Right ventricle myocardium inferior (tissue), 1 donor: ENCODE measurements at regions of chr3 and their contacts with region 1.

Region 1: GRCh38 chr3:16151109-16151765 is 23.2 kb upstream of the GALNT15 start:
- DNase-seq: peak; percentile 84
- ATAC-seq: peak; percentile 75

Region 2: GRCh38 chr3:15645736-15646501 is 505.3 kb before region 1 on chr3:
- intact Hi-C with region 1: no loop called
- DNase-seq: no peak
- ATAC-seq: no peak

Region 3: DNA sequence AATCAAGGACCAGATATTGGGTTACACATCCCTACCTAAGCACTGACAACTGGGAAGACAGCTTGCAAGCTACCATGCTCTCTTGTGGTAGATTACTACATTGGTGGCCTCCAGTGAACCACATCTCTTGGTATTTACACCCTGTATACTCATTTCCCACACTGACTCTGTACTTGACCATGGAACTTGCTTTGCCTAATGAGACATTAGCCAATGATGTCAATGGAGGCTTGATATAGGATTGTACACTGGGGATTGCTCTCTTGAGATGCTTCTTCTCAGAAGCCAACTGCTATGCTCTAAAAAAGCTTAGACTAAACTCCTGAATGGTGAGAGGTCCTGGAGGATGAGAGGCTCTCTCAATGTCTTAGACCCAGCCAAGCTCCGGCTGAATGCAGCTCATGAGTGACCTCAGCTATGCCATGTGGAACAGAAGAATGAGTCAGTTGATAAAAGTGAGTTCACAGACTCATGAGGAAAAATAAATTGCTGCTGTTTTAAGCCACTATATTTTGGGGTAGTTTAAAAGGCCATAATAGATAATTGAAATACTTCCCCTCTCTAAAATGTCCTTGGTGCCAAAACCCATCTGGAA is 38.2 kb before region 1 on chr3:
- intact Hi-C with region 1: loop called (anchors 5 kb)
- DNase-seq: no peak
- ATAC-seq: peak; percentile 50

Region 4: GRCh38 chr3:16554126-16554525 is 402.9 kb after region 1 on chr3:
- intact Hi-C with region 1: no loop called
- DNase-seq: no peak
- ATAC-seq: no peak